Sigmoid colon (tissue), 7 donors: ENCODE measurements at regions of chr3 and their contacts with region 1.

Region 1: GRCh38 chr3:142447852-142448823 is at the start of gene XRN1:
- DNase-seq: peak; percentile 96
- H3K4me3 ChIP-seq: peak within 1 kb of the TSS; percentile 80 to 97 (median 90)
- H3K27ac ChIP-seq: peak within 1 kb of the TSS; percentile 96 to 98 (median 98)
- H3K4me1 ChIP-seq: peaks cover 0 to 41% (median 35%) of the 10 kb centered on the region in 4 donors
- H3K27me3 ChIP-seq: no peaks in the 10 kb centered on the region
- CTCF ChIP-seq: no peak
- EP300 ChIP-seq: no peak
- POLR2A ChIP-seq: peak; percentile 58 to 68
- total RNA-seq, gene XRN1: 29.5 to 45.7 (median 41.0) TPM

Region 2: DNA sequence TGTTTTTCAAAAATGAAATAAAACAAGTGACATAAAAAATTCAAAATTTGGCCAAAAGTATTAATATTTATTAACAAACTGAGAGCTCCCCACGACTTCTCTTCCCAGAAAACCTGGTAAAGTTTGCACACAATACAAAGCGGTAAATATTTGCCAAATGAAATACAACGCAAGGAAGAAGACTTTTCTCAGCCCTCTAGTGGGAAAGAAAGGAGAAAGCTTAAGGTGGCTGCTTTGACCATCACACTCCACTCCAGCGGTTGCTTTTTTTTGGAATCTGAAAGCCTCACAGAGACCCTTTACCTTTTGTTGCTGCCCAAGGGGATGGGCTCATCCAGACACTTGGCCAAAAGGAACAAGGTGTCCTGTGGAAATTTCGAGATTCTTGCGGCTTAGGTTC is 221.7 kb before region 1 on chr3:
- intact Hi-C with region 1: loop called (anchors 10 kb)
- DNase-seq: no peak
- H3K4me3 ChIP-seq: no peak overlapping the region
- H3K27ac ChIP-seq: no peak overlapping the region
- H3K4me1 ChIP-seq: peaks cover 0 to 31% (median 25%) of the 10 kb centered on the region in 4 donors
- H3K27me3 ChIP-seq: no peaks in the 10 kb centered on the region
- CTCF ChIP-seq: no peak
- EP300 ChIP-seq: no peak
- POLR2A ChIP-seq: no peak

Region 3: DNA sequence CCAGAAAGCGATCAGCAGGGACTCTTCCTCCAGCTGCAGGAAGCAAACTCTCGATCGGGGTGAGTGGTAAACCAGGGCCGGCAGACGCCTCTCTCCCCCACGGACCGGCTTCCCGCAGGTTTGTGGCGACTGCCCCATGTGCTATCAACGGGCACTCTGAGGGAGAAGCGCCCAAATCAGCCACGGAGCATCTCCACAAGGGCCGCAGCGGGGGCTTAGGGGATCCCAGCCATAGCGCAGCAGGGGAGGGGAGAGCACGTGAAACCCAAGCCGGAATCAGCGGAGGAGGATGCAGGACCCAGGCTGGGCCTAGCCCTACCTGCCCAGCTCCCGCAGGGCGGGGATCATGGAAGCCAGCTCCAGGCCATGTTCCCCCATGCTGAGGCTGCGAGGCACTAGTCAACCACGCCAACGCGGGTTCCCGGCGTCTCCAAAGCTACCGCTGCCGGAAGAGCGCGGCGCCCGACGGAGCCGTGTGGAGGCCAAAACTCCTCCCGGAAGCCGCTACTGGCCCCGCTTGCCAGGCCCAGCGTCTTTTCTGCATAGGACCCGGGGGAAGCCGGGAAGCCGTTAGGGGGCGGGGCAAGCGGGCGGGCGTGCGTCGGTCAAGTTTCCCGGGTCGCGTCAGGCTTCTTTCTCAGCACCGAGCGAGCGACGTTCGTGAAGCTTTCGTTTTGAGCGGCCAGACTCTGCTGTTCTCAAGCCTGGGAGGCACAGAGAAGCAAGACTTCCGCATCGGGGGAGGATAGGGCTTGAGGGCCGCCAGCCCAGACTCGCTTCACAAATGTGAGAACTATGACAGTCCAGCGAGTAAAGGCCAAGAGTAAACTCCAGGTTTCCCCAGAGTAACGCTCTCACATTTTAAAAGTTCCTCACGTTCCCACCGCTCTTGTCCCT is 130.4 kb after region 1 on chr3 and contains the start of gene ATR:
- intact Hi-C with region 1: loop called (anchors 5 kb)
- DNase-seq: peak; percentile 98
- H3K4me3 ChIP-seq: peak within 1 kb of the TSS; percentile 56 to 83 (median 74)
- H3K27ac ChIP-seq: peak within 1 kb of the TSS; percentile 89 to 92 (median 91)
- H3K4me1 ChIP-seq: peaks cover 0 to 35% (median 19%) of the 10 kb centered on the region in 4 donors
- H3K27me3 ChIP-seq: no peaks in the 10 kb centered on the region
- CTCF ChIP-seq: no peak
- EP300 ChIP-seq: peak in 2 of 4 donors; percentile 16 to 61
- POLR2A ChIP-seq: peak; percentile 62 to 68
- total RNA-seq, gene ATR: 15.2 to 26.1 (median 19.8) TPM

Region 4: DNA sequence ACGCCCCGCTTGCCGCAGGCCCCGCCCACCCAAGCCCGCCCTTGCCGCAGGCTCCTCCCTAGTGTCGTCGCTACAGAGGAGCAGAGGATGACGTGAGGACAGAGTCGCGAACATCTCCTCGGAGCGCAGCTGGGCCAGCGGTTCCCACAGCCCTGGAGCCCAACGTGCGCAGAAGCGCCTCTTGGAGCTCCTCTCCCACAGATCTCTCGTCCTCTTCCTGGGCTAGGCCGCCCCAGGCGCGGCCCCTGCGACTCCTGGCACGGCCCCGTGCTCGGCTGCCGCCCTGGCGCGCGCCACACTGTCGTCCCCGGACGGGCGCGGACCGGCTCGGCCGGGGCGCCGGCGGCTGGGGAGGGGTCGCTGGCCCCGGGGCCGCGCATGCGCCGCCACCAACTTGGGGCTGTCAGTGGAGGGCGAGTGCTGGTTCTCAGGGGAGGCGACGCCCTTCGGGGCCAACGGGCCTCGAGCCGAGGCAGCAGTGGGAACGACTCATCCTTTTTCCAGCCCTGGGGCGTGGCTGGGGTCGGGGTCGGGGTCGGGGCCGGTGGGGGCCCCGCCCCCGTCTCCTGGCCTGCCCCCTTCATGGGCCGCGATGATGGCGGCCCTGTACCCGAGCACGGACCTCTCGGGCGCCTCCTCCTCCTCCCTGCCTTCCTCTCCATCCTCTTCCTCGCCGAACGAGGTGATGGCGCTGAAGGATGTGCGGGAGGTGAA is 276.0 kb after region 1 on chr3 and contains the start of gene TRPC1:
- intact Hi-C with region 1: loop called (anchors 5 kb)
- DNase-seq: peak; percentile 88
- H3K4me3 ChIP-seq: peak within 1 kb of the TSS; percentile 81 to 99 (median 84)
- H3K27ac ChIP-seq: peak within 1 kb of the TSS; percentile 91 to 95 (median 92)
- H3K4me1 ChIP-seq: peaks cover 0 to 18% (median 5%) of the 10 kb centered on the region in 4 donors
- H3K27me3 ChIP-seq: no peaks in the 10 kb centered on the region
- CTCF ChIP-seq: no peak
- EP300 ChIP-seq: no peak
- POLR2A ChIP-seq: peak in 1 of 2 donors; percentile 47
- total RNA-seq, gene TRPC1: 21.4 to 31.0 (median 25.5) TPM

Region 5: DNA sequence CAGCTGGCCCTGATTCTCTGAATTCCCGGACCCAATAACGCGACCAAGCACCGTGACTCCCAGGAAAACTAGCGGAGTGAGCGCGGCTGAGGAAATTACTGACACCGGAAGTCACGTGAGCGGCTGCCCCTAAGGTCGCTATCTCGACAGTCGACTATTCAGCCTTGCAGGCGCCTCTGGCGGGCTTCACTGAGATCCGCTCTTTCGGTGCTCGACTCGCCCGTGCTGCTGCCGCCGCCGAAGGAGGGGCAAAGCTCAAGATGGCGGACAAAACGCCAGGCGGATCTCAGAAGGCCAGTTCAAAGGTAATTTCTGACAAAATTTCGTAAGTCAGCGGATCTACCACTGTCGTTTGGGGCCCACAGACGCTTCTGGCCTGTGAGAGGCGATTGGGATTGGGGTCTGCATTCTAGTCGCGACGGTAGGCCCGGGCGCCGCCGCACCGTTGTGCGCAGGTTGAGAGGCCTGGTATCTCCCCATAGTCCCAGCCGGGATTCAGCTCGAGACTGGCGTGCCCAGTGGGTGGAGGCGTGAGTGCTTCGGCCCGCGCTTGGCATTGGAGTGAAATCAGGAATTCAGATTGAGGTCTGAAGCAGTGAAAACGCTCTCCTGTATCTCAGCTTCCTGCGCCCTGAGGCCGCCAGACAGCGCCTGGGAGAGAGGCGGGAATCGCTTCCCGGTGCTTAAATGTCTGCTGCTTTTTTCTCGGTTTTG is 553.4 kb after region 1 on chr3 and contains the start of gene U2SURP:
- intact Hi-C with region 1: loop called (anchors 5 kb)
- DNase-seq: peak; percentile 98
- H3K4me3 ChIP-seq: peak within 1 kb of the TSS; percentile 64 to 95 (median 94)
- H3K27ac ChIP-seq: peak within 1 kb of the TSS; percentile 91 to 95 (median 92)
- H3K4me1 ChIP-seq: peaks cover 0 to 49% (median 35%) of the 10 kb centered on the region in 4 donors
- H3K27me3 ChIP-seq: no peaks in the 10 kb centered on the region
- CTCF ChIP-seq: no peak
- EP300 ChIP-seq: peak in 2 of 4 donors; percentile 13 to 78
- POLR2A ChIP-seq: peak in 1 of 2 donors; percentile 26
- total RNA-seq, gene U2SURP: 66.8 to 79.8 (median 68.0) TPM